Activated CD4-positive, alpha-beta memory T cell treated with anti-CD3 and anti-CD28 coated beads, Interleukin-2, amount 10 ng/mL, durations not matched to agents 7 days and 5 days (primary cell): ENCODE measurements at regions of chr7 and their contacts with region 1.

Region 1: DNA sequence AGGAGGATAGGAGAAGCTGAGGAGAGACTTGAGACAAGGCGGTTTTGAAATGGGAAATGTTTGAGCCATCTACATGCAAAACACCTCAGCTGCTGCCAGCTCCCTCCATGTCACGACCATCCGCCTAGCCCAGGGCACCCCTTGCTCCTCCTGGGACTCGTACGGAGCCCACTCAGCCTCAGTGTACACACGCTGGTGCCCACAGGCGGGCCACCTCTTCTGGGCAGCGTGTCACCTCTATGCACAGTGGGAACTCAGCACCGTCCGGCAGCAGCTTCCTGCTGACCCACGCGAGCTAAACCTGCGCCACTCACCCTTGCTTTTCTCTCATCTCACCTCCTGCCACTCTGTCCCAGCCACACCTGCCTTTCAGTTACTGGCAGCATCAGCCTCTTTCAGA is 108.3 kb downstream of the GALNT11 start:
- DNase-seq: no peak
- H3K4me3 Mint-ChIP-seq: no peak overlapping the region
- H3K27ac Mint-ChIP-seq: peak overlapping the region; percentile 6
- H3K4me1 Mint-ChIP-seq: no peaks in the 10 kb centered on the region
- H3K27me3 Mint-ChIP-seq: no peaks in the 10 kb centered on the region

Region 2: DNA sequence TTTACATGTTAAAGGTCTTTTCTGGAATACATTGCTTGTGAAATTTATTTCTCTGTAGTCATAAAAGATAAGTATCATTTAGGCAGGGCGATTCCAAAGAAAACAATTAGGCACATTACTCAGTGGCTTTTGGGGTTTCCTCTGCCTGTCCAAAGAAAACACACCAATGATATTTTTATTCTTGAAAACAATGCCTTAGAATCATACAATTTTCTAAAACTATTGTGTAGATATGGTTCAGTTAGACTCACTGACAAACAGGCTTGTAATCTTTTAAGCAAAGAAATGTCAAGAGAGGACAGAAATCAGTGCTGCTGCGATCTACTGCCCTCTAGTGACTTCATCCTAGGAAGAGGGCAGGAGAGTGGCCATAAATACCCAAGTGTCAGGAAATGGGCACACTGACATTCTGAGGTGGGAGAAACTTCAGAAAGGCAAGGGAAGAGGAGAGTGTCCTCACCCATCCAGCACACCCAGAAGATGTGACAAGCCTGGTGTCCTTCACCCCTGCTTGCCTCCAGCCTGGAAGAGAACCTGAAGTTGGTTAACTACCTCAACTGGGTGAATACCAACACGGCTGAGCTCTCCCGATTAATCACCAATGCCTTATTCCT is 12.2 kb after region 1 on chr7:
- CTCF ChIA-PET with region 1: interaction called, 3 read pairs
- POLR2A ChIA-PET with region 1: interaction called, 11 read pairs
- DNase-seq: peak; percentile 32
- H3K4me3 Mint-ChIP-seq: no peak overlapping the region
- H3K27ac Mint-ChIP-seq: peak overlapping the region; percentile 92
- H3K4me1 Mint-ChIP-seq: peaks cover 44% of the 10 kb centered on the region
- H3K27me3 Mint-ChIP-seq: no peaks in the 10 kb centered on the region

Region 3: GRCh38 chr7:152162287-152162686 is 28.5 kb after region 1 on chr7:
- CTCF ChIA-PET with region 1: no interaction called
- POLR2A ChIA-PET with region 1: no interaction called
- DNase-seq: no peak
- H3K4me3 Mint-ChIP-seq: no peak overlapping the region
- H3K27ac Mint-ChIP-seq: no peak overlapping the region
- H3K4me1 Mint-ChIP-seq: peaks cover 5% of the 10 kb centered on the region
- H3K27me3 Mint-ChIP-seq: no peaks in the 10 kb centered on the region

Region 4: GRCh38 chr7:152522571-152523067 is 388.8 kb after region 1 on chr7:
- CTCF ChIA-PET with region 1: no interaction called
- POLR2A ChIA-PET with region 1: no interaction called
- DNase-seq: no peak
- H3K4me3 Mint-ChIP-seq: no peak overlapping the region
- H3K27ac Mint-ChIP-seq: no peak overlapping the region
- H3K4me1 Mint-ChIP-seq: no peaks in the 10 kb centered on the region
- H3K27me3 Mint-ChIP-seq: no peaks in the 10 kb centered on the region